ENCODE measurements at regions of chr17 and their contacts with region 1.

Region 1: DNA sequence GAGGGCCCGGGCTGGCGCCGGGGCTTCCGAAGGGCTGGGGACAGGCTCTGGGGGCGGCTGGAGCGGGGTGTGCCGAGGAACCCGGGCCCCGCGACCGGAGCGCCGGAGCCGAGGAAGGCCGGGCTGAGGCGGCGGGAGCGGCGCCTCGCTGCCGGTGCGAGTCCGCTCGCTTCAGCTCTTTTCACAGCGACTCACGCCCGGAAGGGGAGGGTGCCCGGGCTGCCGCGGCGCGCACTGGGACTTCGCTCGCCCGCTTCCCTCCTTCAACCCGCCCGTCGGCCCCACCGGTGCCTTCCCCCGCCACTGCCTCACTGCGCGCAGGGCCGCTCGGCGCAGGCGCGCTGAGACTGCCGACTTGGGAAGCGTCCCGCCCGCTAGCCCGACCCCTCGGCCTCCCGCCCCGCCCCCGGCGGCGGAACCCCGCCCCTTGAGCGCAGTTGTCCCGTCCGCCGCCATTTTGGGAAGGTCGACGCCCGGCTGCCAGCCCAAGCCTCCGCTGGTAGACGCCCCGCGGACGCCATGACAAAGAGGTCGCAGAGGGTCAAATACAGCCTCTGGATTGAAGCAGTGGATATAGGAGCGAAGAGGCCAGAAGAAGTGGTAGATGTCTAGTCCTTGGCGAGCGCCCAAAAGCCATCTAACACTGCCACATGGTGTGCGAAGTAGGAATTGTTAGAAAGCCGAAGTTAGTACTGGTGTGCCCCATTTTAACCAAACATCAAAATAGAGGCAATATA is at the start of gene UBE2G1:
- DNase-seq: peak; percentile 93 to 96 (median 94)
- ATAC-seq: peak; percentile 93
- H3K4me3 ChIP-seq: peak within 1 kb of the TSS; percentile 91
- H3K27ac ChIP-seq: peak within 1 kb of the TSS; percentile 90
- H3K4me1 ChIP-seq: peaks cover 2 to 25% of the 10 kb centered on the region in 2 experiments; a peak in 3 of 5 replicates
- H3K27me3 ChIP-seq: no peaks in the 10 kb centered on the region
- CTCF ChIP-seq: peak; percentile 53 to 72 (median 67)
- EP300 ChIP-seq: no peak
- POLR2A ChIP-seq: peak; percentile 79
- RAD21 ChIP-seq: peak; percentile 71 to 88
- polyA plus RNA-seq, gene UBE2G1: 10.1 to 16.4 TPM

Region 2: DNA sequence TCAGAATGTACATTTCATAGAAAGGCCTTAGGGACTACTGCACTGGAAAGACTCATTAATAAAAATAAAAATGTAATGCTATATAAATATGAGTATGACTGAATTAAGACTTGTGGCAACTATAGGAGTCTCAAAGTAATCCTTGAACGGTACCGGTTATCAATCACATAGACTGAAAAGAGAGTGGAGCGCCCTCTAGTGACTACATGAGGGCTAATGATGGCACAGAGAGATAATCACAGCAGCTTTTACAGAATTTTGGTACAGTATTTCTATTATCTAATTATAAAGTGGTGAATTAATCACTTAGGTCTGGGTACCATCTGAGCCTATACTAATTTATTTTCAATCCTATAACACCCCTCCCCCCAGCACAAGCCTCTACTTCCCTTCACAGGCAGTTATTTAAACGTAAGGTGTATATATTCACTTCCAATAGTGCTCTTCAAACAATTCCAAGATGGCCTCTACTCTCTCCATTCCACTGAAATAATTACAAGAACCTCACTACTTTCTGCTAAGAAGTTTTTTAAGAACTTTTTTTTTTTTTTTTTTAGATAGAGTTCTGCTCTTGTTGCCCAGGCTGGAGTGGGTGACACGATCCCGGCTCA is 62.0 kb before region 1 on chr17:
- CTCF ChIA-PET with region 1: no interaction called
- POLR2A ChIA-PET with region 1: no interaction called
- in situ Hi-C with region 1: no loop called
- intact Hi-C with region 1: loop called (anchors 2 kb)
- DNase-seq: peak; percentile 55 to 66 (median 62)
- ATAC-seq: peak; percentile 77
- H3K4me3 ChIP-seq: no peak overlapping the region
- H3K27ac ChIP-seq: no peak overlapping the region
- H3K4me1 ChIP-seq: no peaks in the 10 kb centered on the region; a peak in 2 of 5 replicates
- H3K27me3 ChIP-seq: no peaks in the 10 kb centered on the region
- CTCF ChIP-seq: peak; percentile 47 to 65 (median 65); a peak in 5 of 6 replicates
- EP300 ChIP-seq: no peak
- POLR2A ChIP-seq: no peak
- RAD21 ChIP-seq: peak in 1 of 2 experiments; percentile 45; a peak in 2 of 4 replicates